ENCODE measurements at regions of chr6 and their contacts with region 1.

Region 1: DNA sequence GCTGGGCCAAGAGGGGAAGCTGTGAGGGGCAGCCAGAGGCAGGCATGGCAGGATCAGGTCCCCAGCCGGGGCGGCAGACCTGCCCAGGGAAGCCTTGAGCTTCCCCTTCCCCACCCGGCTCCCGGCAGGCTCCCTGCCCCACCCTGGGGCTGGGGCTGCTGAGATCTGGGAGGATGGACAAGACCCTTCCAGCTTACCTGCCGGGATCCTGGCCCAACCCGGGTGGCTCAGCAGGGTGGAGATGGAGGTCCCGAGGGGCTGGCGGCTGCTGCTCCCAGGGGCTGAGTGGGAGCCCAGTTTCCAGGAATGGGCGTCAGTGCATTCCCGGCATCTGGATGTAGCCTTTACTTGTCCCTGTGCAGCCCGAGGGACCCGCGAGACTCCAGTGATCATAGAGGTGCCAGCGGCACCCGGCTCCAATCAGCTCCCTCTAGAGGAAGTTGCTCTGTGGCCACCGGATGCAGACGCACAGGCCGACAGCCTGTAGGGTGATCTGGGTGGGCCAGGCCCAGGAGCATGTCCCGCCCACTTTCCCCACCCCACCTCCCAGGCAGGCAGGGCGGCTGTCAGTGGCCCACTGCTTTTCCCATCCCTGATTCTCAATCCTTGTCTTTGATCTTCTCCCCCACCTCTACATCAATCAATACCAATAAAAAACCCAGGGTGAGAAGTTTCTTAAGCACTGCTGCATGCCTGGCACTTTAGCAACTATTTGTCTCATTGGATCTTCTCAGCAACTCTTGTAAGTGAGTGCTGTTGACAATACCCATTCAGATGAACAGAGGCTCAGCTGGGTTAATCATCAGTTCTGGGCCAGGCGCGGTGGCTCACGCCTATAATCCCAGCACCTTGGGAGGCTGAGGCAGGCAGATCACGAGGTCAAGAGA is at the start of gene BAK1:
- DNase-seq: peak; percentile 56
- ATAC-seq: peak; percentile 93
- H3K4me3 ChIP-seq: peak within 1 kb of the TSS; percentile 93
- H3K27ac ChIP-seq: peak within 1 kb of the TSS; percentile 95
- H3K4me1 ChIP-seq: peaks cover 16% of the 10 kb centered on the region
- H3K27me3 ChIP-seq: no peaks in the 10 kb centered on the region
- CTCF ChIP-seq: peak; percentile 41 to 57 (median 54); a peak in 5 of 6 replicates
- EP300 ChIP-seq: no peak
- POLR2A ChIP-seq: peak; percentile 76
- RAD21 ChIP-seq: 0 out of 2 replicates have a peak, but pooled peaks have one; percentile 22
- polyA plus RNA-seq, gene BAK1: 6.3 to 13.0 TPM

Region 2: GRCh38 chr6:33200219-33201146 is 379.6 kb before region 1 on chr6 and contains the starts of genes RXRB and SLC39A7:
- CTCF ChIA-PET with region 1: no interaction called
- POLR2A ChIA-PET with region 1: no interaction called
- RAD21 ChIA-PET with region 1: no interaction called
- SMC1A ChIA-PET with region 1: no interaction called
- in situ Hi-C with region 1: no loop called
- intact Hi-C with region 1: loop called (anchors 10 kb)
- DNase-seq: peak; percentile 99
- ATAC-seq: peak; percentile 77
- H3K4me3 ChIP-seq: peak within 1 kb of the TSS; percentile 95
- H3K27ac ChIP-seq: peak within 1 kb of the TSS; percentile 99
- H3K4me1 ChIP-seq: peaks cover 33% of the 10 kb centered on the region
- H3K27me3 ChIP-seq: no peaks in the 10 kb centered on the region
- CTCF ChIP-seq: no peak
- EP300 ChIP-seq: peak in 1 of 2 experiments; percentile 12; a peak in 1 of 4 replicates
- POLR2A ChIP-seq: peak; percentile 95
- RAD21 ChIP-seq: no peak
- polyA plus RNA-seq, gene RXRB: 0.71 to 1.6 TPM
- polyA plus RNA-seq, gene SLC39A7: 7.3 to 8.4 TPM

Region 3: GRCh38 chr6:33276864-33277662 is 303.0 kb before region 1 on chr6 and contains the start of gene B3GALT4:
- CTCF ChIA-PET with region 1: no interaction called
- POLR2A ChIA-PET with region 1: no interaction called
- RAD21 ChIA-PET with region 1: no interaction called
- SMC1A ChIA-PET with region 1: no interaction called
- in situ Hi-C with region 1: no loop called
- intact Hi-C with region 1: no loop called
- DNase-seq: peak; percentile 49
- ATAC-seq: peak; percentile 75
- H3K4me3 ChIP-seq: peak within 1 kb of the TSS; percentile 87
- H3K27ac ChIP-seq: peak within 1 kb of the TSS; percentile 86
- H3K4me1 ChIP-seq: peaks cover 22% of the 10 kb centered on the region
- H3K27me3 ChIP-seq: no peaks in the 10 kb centered on the region
- CTCF ChIP-seq: peak; percentile 34 to 60 (median 47); a peak in 4 of 6 replicates
- EP300 ChIP-seq: 0 out of 4 replicates have a peak, but pooled peaks of 1 of the 2 experiments have one; percentile 9
- POLR2A ChIP-seq: peak; percentile 92
- RAD21 ChIP-seq: no peak
- polyA plus RNA-seq, gene B3GALT4: 0.27 to 0.37 TPM

Region 4: DNA sequence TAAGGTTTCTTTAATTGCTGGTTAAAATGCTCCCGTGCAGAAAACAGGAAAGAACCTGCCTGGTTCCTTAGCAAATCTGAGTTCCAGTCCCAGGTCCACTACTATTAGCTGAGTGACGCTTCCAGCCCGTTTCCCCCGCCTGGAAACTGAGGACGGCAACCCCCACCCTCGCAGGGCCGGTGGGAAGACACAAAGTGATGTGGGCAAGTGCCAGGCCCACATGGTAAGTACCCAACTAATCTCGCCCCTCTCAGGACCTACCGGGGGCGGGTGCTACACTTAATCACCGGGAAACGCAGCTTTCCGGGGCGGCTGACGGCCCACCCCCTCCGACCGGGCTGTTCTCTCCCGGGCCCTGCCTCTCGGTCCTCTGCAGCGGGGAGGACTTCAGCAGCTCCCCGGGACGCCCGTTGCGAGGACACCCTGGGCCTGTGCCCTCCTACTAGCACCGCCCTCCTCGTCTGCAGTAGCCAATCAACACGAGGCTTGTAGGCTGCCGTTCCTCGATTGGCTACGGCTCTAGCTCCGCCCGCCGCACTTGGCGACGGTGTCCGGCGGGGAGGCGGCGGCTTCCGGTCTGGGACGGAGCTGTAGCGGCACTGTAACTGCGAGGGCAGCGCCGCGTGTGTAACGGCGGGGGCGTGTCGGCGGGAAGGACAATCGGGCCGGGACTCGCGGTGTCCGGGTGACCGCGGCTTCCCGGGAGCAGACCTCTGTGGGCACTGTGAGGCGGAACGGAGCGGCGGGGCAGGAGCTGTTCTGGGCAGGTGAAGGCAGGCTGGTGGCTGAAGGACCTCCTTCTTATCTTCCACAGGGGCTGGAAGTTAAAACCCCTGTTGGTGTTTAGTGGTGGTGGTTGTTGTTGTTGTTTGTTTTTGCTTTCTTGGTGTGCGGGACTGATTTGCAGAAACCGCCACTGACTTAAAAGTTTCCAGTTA is 125.8 kb before region 1 on chr6 and contains the start of gene ZBTB9:
- CTCF ChIA-PET with region 1: no interaction called
- POLR2A ChIA-PET with region 1: interaction called, 5 read pairs
- RAD21 ChIA-PET with region 1: interaction called, 15 read pairs
- SMC1A ChIA-PET with region 1: interaction called, 5 read pairs
- in situ Hi-C with region 1: no loop called
- intact Hi-C with region 1: no loop called
- DNase-seq: peak; percentile 89
- ATAC-seq: peak; percentile 100
- H3K4me3 ChIP-seq: peak within 1 kb of the TSS; percentile 86
- H3K27ac ChIP-seq: peak within 1 kb of the TSS; percentile 81
- H3K4me1 ChIP-seq: peaks cover 3% of the 10 kb centered on the region; the same call in 1 of the 2 replicates
- H3K27me3 ChIP-seq: no peaks in the 10 kb centered on the region
- CTCF ChIP-seq: no peak
- EP300 ChIP-seq: no peak
- POLR2A ChIP-seq: peak; percentile 94
- RAD21 ChIP-seq: no peak
- polyA plus RNA-seq, gene ZBTB9: 1.5 to 2.6 TPM

Region 5: GRCh38 chr6:34154668-34155447 is 574.8 kb after region 1 on chr6:
- CTCF ChIA-PET with region 1: no interaction called
- POLR2A ChIA-PET with region 1: no interaction called
- RAD21 ChIA-PET with region 1: no interaction called
- SMC1A ChIA-PET with region 1: no interaction called
- in situ Hi-C with region 1: no loop called
- intact Hi-C with region 1: loop called (anchors 10 kb)
- DNase-seq: no peak
- ATAC-seq: peak; percentile 94
- H3K4me3 ChIP-seq: no peak overlapping the region; the same call in 1 of the 2 replicates
- H3K27ac ChIP-seq: no peak overlapping the region
- H3K4me1 ChIP-seq: peaks cover 10% of the 10 kb centered on the region
- H3K27me3 ChIP-seq: peaks cover 3% of the 10 kb centered on the region in 2 experiments; a peak in 3 of 4 replicates
- CTCF ChIP-seq: peak; percentile 91 to 96 (median 96)
- EP300 ChIP-seq: no peak
- POLR2A ChIP-seq: no peak
- RAD21 ChIP-seq: peak; percentile 97

Measured in GM12878 (cell line).